ENCODE measurements at regions of chr19 and their contacts with region 1.

Region 1: DNA sequence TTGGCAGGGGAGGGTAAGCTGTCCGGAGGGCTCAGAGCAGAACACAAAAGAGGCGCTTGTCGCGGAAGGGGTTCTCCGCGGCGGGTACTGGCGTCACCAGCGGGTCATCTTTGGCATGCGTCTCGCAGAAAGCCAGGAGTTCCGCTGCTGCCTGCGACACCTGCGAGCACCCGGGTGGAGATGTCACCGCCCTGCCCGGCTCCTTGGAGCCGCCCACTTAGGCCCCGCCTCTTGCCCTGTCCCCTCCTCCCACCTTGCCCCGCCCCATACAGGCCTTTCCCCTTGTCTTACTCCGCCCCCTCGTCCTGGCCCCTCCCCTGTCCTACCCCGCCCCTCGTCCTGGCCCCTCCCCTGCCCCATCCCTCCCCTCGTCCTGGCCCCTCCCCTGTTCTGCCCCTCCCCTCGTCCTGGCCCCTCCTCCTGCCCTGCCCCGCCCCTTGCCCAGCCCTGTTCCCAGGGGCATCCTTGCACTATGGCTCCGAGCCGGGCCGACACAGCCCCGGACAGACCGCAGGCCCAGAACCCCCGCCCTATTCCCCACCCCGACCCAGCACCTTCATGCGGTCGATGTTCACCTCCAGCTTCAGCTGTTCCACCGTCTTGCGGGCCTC is 1.9 kb downstream of the GNG8 start:
- DNase-seq: peak; percentile 85
- H3K4me3 ChIP-seq: peak overlapping the region; percentile 29 to 51 (median 39)
- H3K27ac ChIP-seq: no peak overlapping the region
- H3K4me1 ChIP-seq: peaks cover 31% of the 10 kb centered on the region
- H3K27me3 ChIP-seq: peaks cover 3% of the 10 kb centered on the region
- CTCF ChIP-seq: no peak

Region 2: DNA sequence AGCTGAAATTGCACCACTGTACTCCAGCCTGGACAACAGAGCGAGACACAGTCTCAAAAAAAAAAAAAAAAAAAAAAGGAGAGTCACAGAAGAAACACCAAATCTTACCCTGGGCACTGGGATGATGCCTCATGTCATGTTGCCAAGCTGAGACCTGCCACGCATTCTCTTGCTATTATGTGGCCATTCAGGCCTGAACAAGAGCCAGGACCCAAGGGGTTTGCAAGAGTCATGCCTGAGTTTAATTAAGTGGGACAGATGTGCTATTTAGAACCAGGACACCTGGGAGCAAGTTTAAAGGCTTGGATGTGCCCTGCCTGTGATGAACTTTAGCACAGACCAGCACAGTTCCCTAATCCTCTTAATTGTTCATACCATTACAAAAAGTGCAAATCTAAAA is 172.6 kb before region 1 on chr19:
- CTCF ChIA-PET with region 1: no interaction called
- dilution Hi-C with region 1: no loop called
- in situ Hi-C with region 1: no loop called
- intact Hi-C with region 1: no loop called
- DNase-seq: peak; percentile 98
- H3K4me3 ChIP-seq: no peak overlapping the region
- H3K27ac ChIP-seq: peak overlapping the region; percentile 84
- H3K4me1 ChIP-seq: peaks cover 39% of the 10 kb centered on the region
- H3K27me3 ChIP-seq: no peaks in the 10 kb centered on the region
- CTCF ChIP-seq: no peak

Region 3: DNA sequence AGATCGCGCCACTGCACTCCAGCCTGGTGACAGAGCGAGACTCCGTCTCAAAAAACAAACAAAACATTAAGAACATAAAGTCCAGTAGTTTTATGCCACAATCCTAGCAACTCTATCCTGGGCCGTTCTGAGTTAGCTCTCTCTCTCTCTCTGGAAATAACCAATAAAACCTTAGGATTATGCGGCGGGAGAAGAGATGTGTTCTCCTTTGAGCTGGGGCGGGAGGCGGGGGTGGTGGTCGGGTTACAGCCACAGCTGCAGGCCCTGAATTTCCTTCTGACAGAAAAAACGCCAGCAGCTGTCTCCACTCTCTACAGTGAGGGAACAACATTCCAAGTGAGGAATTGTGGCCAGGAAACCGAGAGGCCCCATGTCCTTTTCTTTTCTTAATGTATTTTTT is 153.7 kb before region 1 on chr19:
- CTCF ChIA-PET with region 1: interaction called, 11 read pairs
- dilution Hi-C with region 1: no loop called
- in situ Hi-C with region 1: no loop called
- intact Hi-C with region 1: no loop called
- DNase-seq: no peak
- H3K4me3 ChIP-seq: no peak overlapping the region
- H3K27ac ChIP-seq: peak overlapping the region; percentile 63
- H3K4me1 ChIP-seq: peaks cover 33% of the 10 kb centered on the region
- H3K27me3 ChIP-seq: no peaks in the 10 kb centered on the region
- CTCF ChIP-seq: no peak

Region 4: DNA sequence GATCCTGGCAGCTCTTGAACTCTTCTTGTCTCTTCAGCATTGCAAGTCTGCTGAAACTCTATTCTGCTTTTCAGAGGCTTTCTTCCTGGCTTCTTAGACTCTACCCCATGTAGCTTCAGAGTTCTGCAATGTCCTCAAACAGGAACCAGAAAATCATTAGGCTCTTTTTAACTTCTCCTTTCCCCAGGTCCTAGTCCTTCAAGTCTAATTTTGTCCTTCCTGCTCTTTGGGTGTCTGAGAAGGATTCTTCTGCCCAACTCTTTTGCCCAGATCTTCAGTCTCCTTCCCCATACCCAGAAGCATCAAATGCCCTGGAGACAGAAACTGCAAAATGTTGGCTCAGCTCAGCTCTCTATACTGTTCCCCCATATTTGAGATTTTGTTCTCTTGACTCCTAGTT is 83.0 kb before region 1 on chr19:
- CTCF ChIA-PET with region 1: no interaction called
- dilution Hi-C with region 1: no loop called
- in situ Hi-C with region 1: no loop called
- intact Hi-C with region 1: no loop called
- DNase-seq: no peak
- H3K4me3 ChIP-seq: no peak overlapping the region
- H3K27ac ChIP-seq: no peak overlapping the region
- H3K4me1 ChIP-seq: no peaks in the 10 kb centered on the region
- H3K27me3 ChIP-seq: no peaks in the 10 kb centered on the region
- CTCF ChIP-seq: no peak

Region 5: DNA sequence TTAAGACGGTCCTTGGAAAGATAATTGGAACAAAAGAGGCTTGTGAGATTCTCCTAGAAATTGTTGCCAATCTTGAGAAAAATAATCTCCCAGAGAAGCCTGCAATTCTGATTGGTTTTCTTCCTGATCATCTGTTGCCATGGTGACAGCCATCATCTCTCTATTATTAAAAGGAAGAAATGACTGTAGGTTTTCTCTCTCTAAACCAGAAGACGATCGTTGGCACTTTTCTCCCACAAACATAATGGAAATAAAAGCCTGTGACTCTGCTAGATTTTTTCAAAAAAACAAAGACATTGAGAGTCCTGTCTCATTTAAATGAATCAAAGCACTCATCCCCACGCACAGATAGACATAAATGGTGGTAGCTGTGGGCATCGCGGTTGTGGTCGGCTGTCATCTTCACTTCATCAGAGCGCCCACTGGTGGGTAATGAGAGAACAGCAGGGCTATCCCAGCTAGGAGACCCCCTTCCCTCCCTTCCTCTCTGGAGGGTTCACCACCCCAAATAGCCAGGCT is 54.7 kb before region 1 on chr19:
- CTCF ChIA-PET with region 1: no interaction called
- dilution Hi-C with region 1: loop called (anchors 5 kb)
- in situ Hi-C with region 1: no loop called
- intact Hi-C with region 1: no loop called
- DNase-seq: no peak
- H3K4me3 ChIP-seq: no peak overlapping the region
- H3K27ac ChIP-seq: no peak overlapping the region
- H3K4me1 ChIP-seq: no peaks in the 10 kb centered on the region
- H3K27me3 ChIP-seq: no peaks in the 10 kb centered on the region
- CTCF ChIP-seq: no peak

Region 6: DNA sequence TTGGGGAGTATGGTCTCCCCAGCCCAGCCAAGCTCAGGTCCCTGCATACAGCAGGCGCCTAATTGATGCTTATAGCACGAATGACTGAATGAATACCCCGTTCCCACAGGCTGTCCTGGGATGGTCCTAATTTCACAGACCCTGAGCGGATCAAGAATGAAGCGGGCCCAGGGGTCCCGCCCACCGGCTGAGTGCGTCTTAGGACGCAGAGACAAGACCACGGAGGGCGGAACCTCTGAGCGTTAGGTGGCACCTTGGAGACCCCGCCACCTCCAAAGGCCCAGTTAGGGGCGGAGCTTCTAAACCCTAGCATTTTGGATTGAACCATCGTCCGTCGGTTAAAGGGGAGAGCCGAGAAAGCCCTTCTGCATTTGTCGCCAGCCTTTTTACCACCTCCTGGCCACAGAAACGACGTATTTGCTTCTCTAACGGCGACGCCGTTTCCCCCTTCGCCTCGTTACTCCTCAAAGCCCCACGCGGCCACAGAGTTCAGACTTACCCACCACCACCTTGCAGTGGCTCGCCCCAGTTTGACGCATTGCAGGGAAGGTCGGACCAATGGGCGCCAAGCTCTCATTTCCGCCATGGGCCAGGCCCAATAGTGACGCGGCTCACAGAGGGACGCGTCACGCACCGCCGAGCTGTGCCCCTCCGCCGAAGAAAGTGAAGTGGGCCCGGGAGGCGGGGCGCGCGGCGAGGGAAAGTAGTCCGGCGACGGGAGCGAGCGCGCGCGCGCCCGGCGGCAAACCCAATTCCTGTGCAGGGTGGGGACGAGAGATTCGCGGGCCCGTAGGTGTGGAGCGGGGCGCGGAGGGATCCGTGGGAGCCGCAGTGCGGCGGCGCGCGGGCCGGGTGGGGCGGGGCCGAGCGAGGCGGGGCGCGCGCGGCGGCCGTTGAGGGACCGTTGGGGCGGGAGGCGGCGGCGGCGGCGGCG is 33.5 kb before region 1 on chr19:
- CTCF ChIA-PET with region 1: no interaction called
- dilution Hi-C with region 1: no loop called
- in situ Hi-C with region 1: no loop called
- intact Hi-C with region 1: loop called (anchors 2 kb)
- DNase-seq: peak; percentile 97
- H3K4me3 ChIP-seq: peak overlapping the region; percentile 77 to 98 (median 97)
- H3K27ac ChIP-seq: peak overlapping the region; percentile 100
- H3K4me1 ChIP-seq: peaks cover 16% of the 10 kb centered on the region
- H3K27me3 ChIP-seq: no peaks in the 10 kb centered on the region
- CTCF ChIP-seq: no peak

Region 7: GRCh38 chr19:46717034-46717723 is 83.0 kb after region 1 on chr19 and contains the start of gene PRKD2:
- CTCF ChIA-PET with region 1: no interaction called
- dilution Hi-C with region 1: loop called (anchors 5 kb)
- in situ Hi-C with region 1: no loop called
- intact Hi-C with region 1: loop called (anchors 5 kb)
- DNase-seq: peak; percentile 72
- H3K4me3 ChIP-seq: peak within 1 kb of the TSS; percentile 59 to 91 (median 63)
- H3K27ac ChIP-seq: peak within 1 kb of the TSS; percentile 82
- H3K4me1 ChIP-seq: peaks cover 32% of the 10 kb centered on the region
- H3K27me3 ChIP-seq: no peaks in the 10 kb centered on the region
- CTCF ChIP-seq: no peak
- total RNA-seq, gene PRKD2: 20.2 to 55.5 TPM